Naive thymus-derived CD4-positive, alpha-beta T cell (primary cell): ENCODE measurements at regions of chr17 and their contacts with region 1.

Region 1: DNA sequence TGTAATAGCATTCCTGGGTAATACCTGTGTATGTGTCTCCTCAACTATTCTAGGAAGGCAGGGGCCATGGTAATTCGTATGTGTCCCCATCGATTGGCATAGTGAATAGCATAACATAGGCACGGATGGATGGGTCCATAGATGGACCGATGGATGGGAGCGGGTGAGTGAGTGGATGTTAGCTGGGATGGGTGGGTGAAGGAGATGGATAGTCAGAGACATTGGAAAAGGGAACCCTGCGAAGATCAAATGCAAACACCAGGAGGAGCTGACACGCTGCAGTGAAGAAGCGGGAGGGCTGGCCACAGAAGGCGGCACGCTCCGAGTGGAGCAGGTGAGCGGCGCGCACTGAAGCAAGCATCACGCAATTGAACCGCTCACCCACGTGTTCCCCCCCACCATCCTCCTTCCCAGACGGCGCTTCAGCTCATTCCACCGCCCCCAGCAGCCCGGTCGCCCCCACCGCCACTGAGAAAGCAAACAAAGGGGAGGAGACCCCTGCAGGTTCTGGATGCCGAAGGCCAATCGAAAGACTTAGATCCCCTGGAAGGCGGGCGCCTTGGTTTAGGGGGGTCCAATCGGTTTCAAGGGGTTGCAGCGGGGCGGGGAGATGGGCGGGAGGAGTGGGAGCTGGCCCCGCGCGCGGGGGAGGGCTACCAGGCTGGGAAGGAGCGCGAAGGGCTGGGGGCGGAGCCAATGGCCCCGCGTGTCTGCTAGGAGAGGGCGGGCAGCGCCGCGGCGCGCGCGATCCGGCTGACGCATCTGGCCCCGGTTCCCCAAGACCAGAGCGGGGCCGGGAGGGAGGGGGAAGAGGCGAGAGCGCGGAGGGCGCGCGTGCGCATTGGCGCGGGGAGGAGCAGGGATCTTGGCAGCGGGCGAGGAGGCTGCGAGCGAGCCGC is at the start of gene ARRB2:
- DNase-seq: peak; percentile 97 to 99 (median 99)
- ATAC-seq: peak; percentile 91
- H3K4me3 ChIP-seq: peak within 1 kb of the TSS; percentile 89
- H3K4me3 Mint-ChIP-seq: peak within 1 kb of the TSS; percentile 89 to 99 (median 97)
- H3K27ac ChIP-seq: peak within 1 kb of the TSS; percentile 84
- H3K27ac Mint-ChIP-seq: peak within 1 kb of the TSS; percentile 69 to 98 (median 92)
- H3K4me1 ChIP-seq: peaks cover 28 to 34% of the 10 kb centered on the region in 2 donors
- H3K4me1 Mint-ChIP-seq: peaks cover 21 to 63% (median 49%) of the 10 kb centered on the region in 7 donors
- H3K27me3 ChIP-seq: no peaks in the 10 kb centered on the region
- H3K27me3 Mint-ChIP-seq: no peaks in the 10 kb centered on the region
- total RNA-seq, gene ARRB2: 270 to 601 (median 377) TPM

Region 2: DNA sequence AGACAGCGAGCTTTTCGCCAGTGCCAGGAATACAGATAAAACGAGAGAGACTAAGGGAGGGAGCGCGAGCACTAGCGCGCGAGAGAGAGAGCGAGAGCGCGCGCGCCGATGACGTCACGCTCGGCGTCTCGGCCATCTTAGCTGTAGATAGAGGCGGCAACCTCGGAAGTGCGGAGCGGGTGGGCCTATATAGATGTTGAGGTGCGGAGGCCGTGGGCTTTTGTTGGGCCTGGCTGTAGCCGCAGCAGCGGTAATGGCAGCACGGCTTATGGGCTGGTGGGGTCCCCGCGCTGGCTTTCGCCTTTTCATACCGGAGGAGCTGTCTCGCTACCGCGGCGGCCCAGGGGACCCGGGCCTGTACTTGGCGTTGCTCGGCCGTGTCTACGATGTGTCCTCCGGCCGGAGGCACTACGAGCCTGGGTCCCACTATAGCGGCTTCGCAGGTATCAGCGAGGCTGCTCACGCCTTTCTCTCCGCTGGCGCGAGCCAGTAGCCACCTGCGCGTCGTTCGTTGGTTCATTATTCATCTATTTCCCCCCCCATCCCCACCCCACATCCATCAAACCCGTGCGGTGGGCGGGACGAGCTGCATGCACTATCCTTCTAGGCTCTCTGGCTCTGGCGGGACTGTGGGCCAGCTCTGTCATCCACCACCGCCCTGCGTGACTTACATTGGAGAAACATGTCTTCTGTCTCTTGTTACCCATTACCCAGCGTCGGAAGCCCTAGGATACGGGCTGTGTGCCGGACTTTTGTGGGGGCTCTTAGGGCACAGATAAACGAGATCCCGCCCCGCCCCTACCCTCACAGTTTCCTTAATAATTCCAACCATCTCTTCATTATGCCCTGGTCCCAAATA is 566.3 kb before region 1 on chr17:
- CTCF ChIA-PET with region 1: interaction called, 3 read pairs
- POLR2A ChIA-PET with region 1: no interaction called
- intact Hi-C with region 1: loop called in 1 of 2 experiments (anchors 1 kb)
- DNase-seq: peak; percentile 85 to 94 (median 91)
- ATAC-seq: peak; percentile 81
- H3K4me3 ChIP-seq: peak overlapping the region; percentile 90
- H3K4me3 Mint-ChIP-seq: peak overlapping the region; percentile 94 to 100 (median 99)
- H3K27ac ChIP-seq: peak overlapping the region; percentile 100
- H3K27ac Mint-ChIP-seq: peak overlapping the region; percentile 99 to 100 (median 100)
- H3K4me1 ChIP-seq: peaks cover 36 to 40% of the 10 kb centered on the region in 2 donors
- H3K4me1 Mint-ChIP-seq: peaks cover 36 to 48% (median 46%) of the 10 kb centered on the region in 7 donors
- H3K27me3 ChIP-seq: no peaks in the 10 kb centered on the region
- H3K27me3 Mint-ChIP-seq: peaks cover 0 to 2% (median 0%) of the 10 kb centered on the region in 5 donors

Region 3: DNA sequence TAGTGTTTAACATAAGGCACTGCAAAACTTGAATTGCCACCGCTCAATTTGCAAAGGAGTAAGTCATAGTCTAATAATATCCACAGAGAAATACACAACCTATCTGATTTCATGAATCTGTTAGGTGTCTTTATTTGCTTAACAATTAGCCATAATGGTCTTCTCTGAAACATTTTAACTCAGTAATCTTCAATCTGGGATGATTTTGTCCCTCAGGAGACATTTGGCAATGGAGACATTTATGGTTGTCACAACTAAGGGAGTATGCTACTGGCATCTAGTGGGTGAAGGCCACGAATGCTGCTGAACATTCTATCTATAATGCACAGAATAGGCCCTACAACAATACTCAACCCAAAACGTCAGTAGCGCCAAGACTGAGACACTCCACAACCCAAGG is 347.9 kb before region 1 on chr17:
- CTCF ChIA-PET with region 1: no interaction called
- POLR2A ChIA-PET with region 1: no interaction called
- intact Hi-C with region 1: no loop called
- DNase-seq: no peak
- ATAC-seq: no peak
- H3K4me3 ChIP-seq: no peak overlapping the region
- H3K4me3 Mint-ChIP-seq: peak overlapping the region in 6 of 10 donors; percentile 3 to 45 (median 27)
- H3K27ac ChIP-seq: no peak overlapping the region
- H3K27ac Mint-ChIP-seq: peak overlapping the region in 4 of 9 donors; percentile 1 to 61 (median 36)
- H3K4me1 ChIP-seq: peaks cover 11% of the 10 kb centered on the region in 2 donors
- H3K4me1 Mint-ChIP-seq: peaks cover 43 to 69% (median 62%) of the 10 kb centered on the region in 7 donors
- H3K27me3 ChIP-seq: no peaks in the 10 kb centered on the region
- H3K27me3 Mint-ChIP-seq: no peaks in the 10 kb centered on the region

Region 4: DNA sequence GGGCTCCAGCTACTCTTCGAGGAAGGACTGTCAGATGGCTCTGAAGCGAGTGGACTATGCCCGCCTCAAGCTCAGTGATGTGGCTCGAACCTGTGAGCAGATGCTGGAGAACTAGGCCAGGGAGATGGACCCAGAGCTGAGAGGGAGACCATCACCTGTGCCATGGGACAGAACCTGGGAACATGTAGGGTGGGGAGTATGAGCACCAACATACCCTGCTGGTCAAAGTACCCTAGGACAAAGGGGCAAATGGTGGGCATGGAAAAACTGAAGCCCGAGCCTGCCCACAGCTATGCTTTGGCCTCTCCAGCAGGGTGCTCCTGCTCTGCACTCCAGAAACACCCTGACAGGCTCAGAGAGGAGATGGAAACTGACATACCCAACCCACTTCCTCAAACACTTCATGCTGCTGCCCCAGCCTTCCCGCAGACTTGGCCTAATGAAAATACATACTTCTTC is 23.1 kb after region 1 on chr17:
- CTCF ChIA-PET with region 1: interaction called, 10 read pairs
- POLR2A ChIA-PET with region 1: interaction called, 12 read pairs
- intact Hi-C with region 1: loop called (anchors 1 kb)
- DNase-seq: no peak
- ATAC-seq: peak; percentile 40
- H3K4me3 ChIP-seq: no peak overlapping the region
- H3K4me3 Mint-ChIP-seq: peak overlapping the region in 8 of 10 donors; percentile 8 to 99 (median 44)
- H3K27ac ChIP-seq: no peak overlapping the region
- H3K27ac Mint-ChIP-seq: peak overlapping the region in 4 of 9 donors; percentile 25 to 55 (median 44)
- H3K4me1 ChIP-seq: peaks cover 10 to 14% of the 10 kb centered on the region in 2 donors
- H3K4me1 Mint-ChIP-seq: peaks cover 4 to 39% (median 28%) of the 10 kb centered on the region in 7 donors
- H3K27me3 ChIP-seq: no peaks in the 10 kb centered on the region
- H3K27me3 Mint-ChIP-seq: peaks cover 0 to 6% (median 0%) of the 10 kb centered on the region in 5 donors

Region 5: DNA sequence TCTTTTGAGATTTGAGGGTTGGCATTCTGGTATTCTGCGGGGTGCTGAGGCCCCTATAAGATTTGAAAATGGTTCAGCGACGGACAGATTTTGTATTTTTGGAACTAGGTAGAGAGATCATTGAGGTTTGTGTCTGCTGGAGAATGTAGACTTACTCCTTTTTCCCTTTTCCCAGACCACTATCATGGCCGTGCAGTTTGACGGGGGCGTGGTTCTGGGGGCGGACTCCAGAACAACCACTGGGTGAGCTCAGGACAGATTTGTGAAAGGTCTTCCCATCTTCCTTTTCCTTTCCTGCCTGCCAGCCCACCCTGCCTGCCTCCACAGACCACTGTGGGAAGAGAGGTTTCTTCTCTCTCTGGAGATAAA is 86.5 kb after region 1 on chr17:
- CTCF ChIA-PET with region 1: interaction called, 3 read pairs
- POLR2A ChIA-PET with region 1: interaction called, 48 read pairs
- intact Hi-C with region 1: loop called (anchors 1 to 2 kb)
- DNase-seq: peak in 1 of 9 donors; percentile 43
- ATAC-seq: no peak
- H3K4me3 ChIP-seq: peak overlapping the region; percentile 76
- H3K4me3 Mint-ChIP-seq: peak overlapping the region; percentile 96 to 100 (median 99)
- H3K27ac ChIP-seq: peak overlapping the region; percentile 84
- H3K27ac Mint-ChIP-seq: peak overlapping the region; percentile 90 to 99 (median 96)
- H3K4me1 ChIP-seq: peaks cover 7% of the 10 kb centered on the region in 2 donors
- H3K4me1 Mint-ChIP-seq: peaks cover 12 to 14% (median 13%) of the 10 kb centered on the region in 7 donors
- H3K27me3 ChIP-seq: no peaks in the 10 kb centered on the region
- H3K27me3 Mint-ChIP-seq: peaks cover 0 to 6% (median 0%) of the 10 kb centered on the region in 5 donors

Region 6: GRCh38 chr17:4881761-4882555 is 171.9 kb after region 1 on chr17:
- CTCF ChIA-PET with region 1: interaction called, 15 read pairs
- POLR2A ChIA-PET with region 1: interaction called, 3 read pairs
- intact Hi-C with region 1: loop called (anchors 1 kb)
- DNase-seq: peak; percentile 51 to 73 (median 61)
- ATAC-seq: peak; percentile 90
- H3K4me3 ChIP-seq: no peak overlapping the region
- H3K4me3 Mint-ChIP-seq: no peak overlapping the region
- H3K27ac ChIP-seq: no peak overlapping the region
- H3K27ac Mint-ChIP-seq: no peak overlapping the region
- H3K4me1 ChIP-seq: no peaks in the 10 kb centered on the region
- H3K4me1 Mint-ChIP-seq: peaks cover 0 to 4% (median 0%) of the 10 kb centered on the region in 7 donors
- H3K27me3 ChIP-seq: no peaks in the 10 kb centered on the region
- H3K27me3 Mint-ChIP-seq: no peaks in the 10 kb centered on the region

Region 7: GRCh38 chr17:4939796-4940624 is 230.0 kb after region 1 on chr17 and contains the starts of genes RNF167 and SLC25A11:
- CTCF ChIA-PET with region 1: no interaction called
- POLR2A ChIA-PET with region 1: interaction called, 20 read pairs
- intact Hi-C with region 1: loop called (anchors 1 to 2 kb)
- DNase-seq: peak; percentile 86 to 99 (median 98)
- ATAC-seq: peak; percentile 94
- H3K4me3 ChIP-seq: peak within 1 kb of the TSS; percentile 89
- H3K4me3 Mint-ChIP-seq: peak within 1 kb of the TSS; percentile 92 to 100 (median 98)
- H3K27ac ChIP-seq: peak within 1 kb of the TSS; percentile 89
- H3K27ac Mint-ChIP-seq: peak within 1 kb of the TSS; percentile 89 to 98 (median 95)
- H3K4me1 ChIP-seq: peaks cover 47 to 48% of the 10 kb centered on the region in 2 donors
- H3K4me1 Mint-ChIP-seq: peaks cover 52 to 77% (median 66%) of the 10 kb centered on the region in 7 donors
- H3K27me3 ChIP-seq: no peaks in the 10 kb centered on the region
- H3K27me3 Mint-ChIP-seq: no peaks in the 10 kb centered on the region
- total RNA-seq, gene RNF167: 97.3 to 248 (median 148) TPM
- total RNA-seq, gene SLC25A11: 27.0 to 82.6 (median 44.1) TPM

Region 8: DNA sequence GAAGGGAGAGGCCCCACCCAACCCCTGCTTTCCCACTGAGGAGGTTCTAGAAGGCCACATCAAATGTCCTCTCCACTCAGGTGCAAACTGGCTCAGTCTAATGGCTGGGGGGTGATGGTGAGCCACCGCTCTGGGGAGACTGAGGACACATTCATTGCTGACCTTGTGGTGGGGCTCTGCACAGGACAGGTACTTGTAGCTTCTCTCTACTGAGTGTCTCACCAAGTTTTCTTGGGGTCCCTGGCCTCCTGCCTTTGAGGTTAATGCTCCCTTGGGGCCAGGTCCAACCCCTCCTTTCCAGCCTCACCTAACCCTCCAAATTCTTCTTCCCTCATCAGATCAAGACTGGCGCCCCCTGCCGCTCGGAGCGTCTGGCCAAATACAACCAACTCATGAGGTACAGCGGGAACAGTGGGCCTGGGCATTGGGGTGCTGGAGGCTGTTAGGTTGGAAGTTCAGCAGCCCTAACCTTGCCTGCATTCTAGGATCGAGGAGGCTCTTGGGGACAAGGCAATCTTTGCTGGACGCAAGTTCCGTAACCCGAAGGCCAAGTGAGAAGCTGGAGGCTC is 246.5 kb after region 1 on chr17:
- CTCF ChIA-PET with region 1: no interaction called
- POLR2A ChIA-PET with region 1: no interaction called
- intact Hi-C with region 1: no loop called
- DNase-seq: peak in 3 of 9 donors; percentile 9 to 47 (median 36)
- ATAC-seq: no peak
- H3K4me3 ChIP-seq: no peak overlapping the region
- H3K4me3 Mint-ChIP-seq: no peak overlapping the region
- H3K27ac ChIP-seq: no peak overlapping the region
- H3K27ac Mint-ChIP-seq: peak overlapping the region in 1 of 9 donors; percentile 67
- H3K4me1 ChIP-seq: peaks cover 0 to 7% of the 10 kb centered on the region in 2 donors
- H3K4me1 Mint-ChIP-seq: peaks cover 0 to 20% (median 13%) of the 10 kb centered on the region in 7 donors
- H3K27me3 ChIP-seq: no peaks in the 10 kb centered on the region
- H3K27me3 Mint-ChIP-seq: no peaks in the 10 kb centered on the region

Region 9: GRCh38 chr17:4997302-4998026 is 287.4 kb after region 1 on chr17 and contains the starts of genes INCA1 and KIF1C:
- CTCF ChIA-PET with region 1: no interaction called
- POLR2A ChIA-PET with region 1: no interaction called
- intact Hi-C with region 1: loop called in 1 of 2 experiments (anchors 1 kb)
- DNase-seq: peak; percentile 84 to 95 (median 92)
- ATAC-seq: peak; percentile 99
- H3K4me3 ChIP-seq: peak within 1 kb of the TSS; percentile 75
- H3K4me3 Mint-ChIP-seq: peak within 1 kb of the TSS; percentile 80 to 95 (median 88)
- H3K27ac ChIP-seq: peak within 1 kb of the TSS; percentile 83
- H3K27ac Mint-ChIP-seq: peak within 1 kb of the TSS; percentile 76 to 95 (median 88)
- H3K4me1 ChIP-seq: peaks cover 8 to 11% of the 10 kb centered on the region in 2 donors
- H3K4me1 Mint-ChIP-seq: peaks cover 18 to 29% (median 26%) of the 10 kb centered on the region in 7 donors
- H3K27me3 ChIP-seq: no peaks in the 10 kb centered on the region
- H3K27me3 Mint-ChIP-seq: no peaks in the 10 kb centered on the region
- total RNA-seq, gene INCA1: 0.38 to 0.42 (median 0.41) TPM in 4 of 5 experiments, not detected in the other
- total RNA-seq, gene KIF1C: 11.5 to 46.5 (median 21.0) TPM